Activated CD4-positive, alpha-beta T cell treated with anti-CD3 and anti-CD28 coated beads, Interleukin-2, amount 10 ng/mL, durations not matched to agents 24 days and 14 days (primary cell): ENCODE measurements at regions of chr3 and their contacts with region 1.

Region 1: GRCh38 chr3:169772897-169773828 is at the start of gene MYNN:
- DNase-seq: peak; percentile 98
- H3K4me3 Mint-ChIP-seq: peak within 1 kb of the TSS; percentile 99
- H3K27ac Mint-ChIP-seq: peak within 1 kb of the TSS; percentile 100
- H3K4me1 Mint-ChIP-seq: peaks cover 31% of the 10 kb centered on the region
- H3K27me3 Mint-ChIP-seq: no peaks in the 10 kb centered on the region
- total RNA-seq, gene MYNN: 15.9 and 17.2 TPM in 2 replicates

Region 2: DNA sequence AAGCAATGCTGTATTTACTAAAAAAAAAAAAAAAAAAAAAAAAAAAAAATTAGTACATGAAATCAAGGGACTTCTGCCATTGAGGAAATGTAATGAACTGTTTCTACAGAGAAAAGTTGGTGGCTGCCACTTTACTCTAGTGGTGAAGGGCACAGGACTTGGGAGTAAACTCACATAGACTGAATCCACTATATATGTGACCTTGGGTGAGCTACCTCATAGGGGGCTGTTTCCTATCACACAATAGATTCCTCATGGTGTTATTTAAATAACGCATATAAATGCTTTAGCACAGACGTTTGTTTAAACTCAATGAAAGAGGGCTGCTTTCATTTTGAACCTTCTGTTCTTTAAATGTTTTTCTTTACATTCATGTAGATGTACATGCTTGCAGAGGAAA is 34.1 kb before region 1 on chr3:
- intact Hi-C with region 1: no loop called
- DNase-seq: no peak
- H3K4me3 Mint-ChIP-seq: no peak overlapping the region
- H3K27ac Mint-ChIP-seq: no peak overlapping the region
- H3K4me1 Mint-ChIP-seq: no peaks in the 10 kb centered on the region
- H3K27me3 Mint-ChIP-seq: peaks cover 2% of the 10 kb centered on the region

Region 3: DNA sequence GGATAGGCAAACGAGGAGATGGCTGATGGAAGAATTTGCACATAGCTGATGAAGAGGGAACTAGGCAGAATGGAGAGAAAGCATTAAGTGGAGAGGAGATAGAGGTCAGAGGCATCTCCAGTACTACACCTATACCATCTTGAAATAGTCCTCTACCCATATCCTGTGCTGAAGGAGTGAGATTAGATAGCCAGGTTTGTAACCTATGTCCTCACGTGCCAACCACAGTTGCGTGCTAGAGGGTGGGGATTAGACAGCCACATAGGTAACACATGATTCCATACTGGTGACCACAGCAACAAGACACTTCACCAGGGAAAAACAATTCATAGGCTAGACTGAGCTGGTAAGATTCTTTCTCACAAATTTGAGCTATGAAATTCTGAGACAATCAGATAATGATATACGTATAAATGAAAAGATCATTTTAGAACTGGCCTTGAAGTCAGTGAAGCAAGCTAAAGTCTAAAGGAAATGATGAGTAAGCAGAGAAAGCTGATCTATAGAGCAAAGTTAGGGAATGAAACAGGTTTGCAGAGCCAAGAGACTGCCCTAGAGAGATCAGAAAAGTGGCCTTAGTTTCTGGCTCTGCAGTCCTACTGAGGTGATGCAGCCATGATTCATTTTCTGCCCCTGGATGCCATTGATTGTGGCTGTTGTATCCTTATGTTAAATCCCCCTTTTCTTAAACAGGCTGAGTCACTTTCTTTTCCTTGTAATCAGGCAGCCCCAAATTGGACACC is 17.7 kb after region 1 on chr3:
- intact Hi-C with region 1: loop called (anchors 1 kb)
- DNase-seq: no peak
- H3K4me3 Mint-ChIP-seq: no peak overlapping the region
- H3K27ac Mint-ChIP-seq: no peak overlapping the region
- H3K4me1 Mint-ChIP-seq: peaks cover 5% of the 10 kb centered on the region
- H3K27me3 Mint-ChIP-seq: no peaks in the 10 kb centered on the region

Region 4: DNA sequence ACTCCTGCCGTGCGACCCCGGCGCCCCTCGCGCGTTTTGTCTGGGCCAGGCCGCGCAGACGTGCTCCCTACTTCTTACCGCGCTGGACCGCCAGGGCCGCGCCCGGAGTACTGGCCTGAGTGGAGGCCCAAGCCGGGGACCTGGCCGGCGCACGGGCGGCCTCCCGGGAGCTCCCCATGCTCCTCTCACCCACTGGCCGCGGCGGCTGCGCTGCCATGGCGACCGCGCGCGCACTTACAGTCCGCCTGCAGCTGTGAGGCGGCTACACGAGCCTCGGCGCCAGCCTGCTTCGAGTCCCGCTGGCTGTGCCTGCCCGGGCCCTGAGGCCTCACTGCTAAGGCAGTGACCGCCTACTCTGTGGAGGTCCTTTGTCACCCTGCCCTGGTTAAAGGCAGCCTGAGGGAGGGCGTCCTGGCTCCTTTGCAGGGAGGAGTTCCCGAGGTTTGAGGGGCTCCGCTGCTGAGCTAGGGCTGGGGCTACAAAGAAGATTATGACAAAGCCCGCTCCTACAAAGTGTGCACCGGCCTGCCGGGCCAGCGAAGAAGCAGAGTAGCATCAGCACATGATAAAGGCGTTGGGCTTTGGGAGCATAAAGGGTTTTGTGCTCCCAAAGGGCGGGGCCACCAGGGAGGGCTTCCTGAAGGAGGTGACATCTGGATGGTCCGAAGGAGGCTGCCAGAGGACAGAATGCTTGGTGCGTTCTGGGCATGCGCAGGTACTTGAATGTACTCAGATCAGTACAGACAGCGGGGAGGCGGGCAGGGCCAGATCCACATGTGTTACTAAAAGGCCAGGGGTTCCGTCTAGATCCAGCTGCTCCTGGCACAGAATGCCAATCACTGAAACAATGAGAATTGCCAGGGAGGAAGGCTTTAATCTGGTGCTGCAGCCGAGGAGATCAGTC is 39.4 kb after region 1 on chr3 and contains the starts of genes LRRC34 and LRRIQ4:
- intact Hi-C with region 1: loop called (anchors 1 kb)
- DNase-seq: peak; percentile 91
- H3K4me3 Mint-ChIP-seq: peak within 1 kb of the TSS; percentile 92
- H3K27ac Mint-ChIP-seq: peak within 1 kb of the TSS; percentile 91
- H3K4me1 Mint-ChIP-seq: peaks cover 40% of the 10 kb centered on the region
- H3K27me3 Mint-ChIP-seq: peaks cover 14% of the 10 kb centered on the region
- total RNA-seq, gene LRRC34: 4.7 and 5.8 TPM in 2 replicates
- total RNA-seq, gene LRRIQ4: 0.09 and 0.21 TPM in 2 replicates

Region 5: DNA sequence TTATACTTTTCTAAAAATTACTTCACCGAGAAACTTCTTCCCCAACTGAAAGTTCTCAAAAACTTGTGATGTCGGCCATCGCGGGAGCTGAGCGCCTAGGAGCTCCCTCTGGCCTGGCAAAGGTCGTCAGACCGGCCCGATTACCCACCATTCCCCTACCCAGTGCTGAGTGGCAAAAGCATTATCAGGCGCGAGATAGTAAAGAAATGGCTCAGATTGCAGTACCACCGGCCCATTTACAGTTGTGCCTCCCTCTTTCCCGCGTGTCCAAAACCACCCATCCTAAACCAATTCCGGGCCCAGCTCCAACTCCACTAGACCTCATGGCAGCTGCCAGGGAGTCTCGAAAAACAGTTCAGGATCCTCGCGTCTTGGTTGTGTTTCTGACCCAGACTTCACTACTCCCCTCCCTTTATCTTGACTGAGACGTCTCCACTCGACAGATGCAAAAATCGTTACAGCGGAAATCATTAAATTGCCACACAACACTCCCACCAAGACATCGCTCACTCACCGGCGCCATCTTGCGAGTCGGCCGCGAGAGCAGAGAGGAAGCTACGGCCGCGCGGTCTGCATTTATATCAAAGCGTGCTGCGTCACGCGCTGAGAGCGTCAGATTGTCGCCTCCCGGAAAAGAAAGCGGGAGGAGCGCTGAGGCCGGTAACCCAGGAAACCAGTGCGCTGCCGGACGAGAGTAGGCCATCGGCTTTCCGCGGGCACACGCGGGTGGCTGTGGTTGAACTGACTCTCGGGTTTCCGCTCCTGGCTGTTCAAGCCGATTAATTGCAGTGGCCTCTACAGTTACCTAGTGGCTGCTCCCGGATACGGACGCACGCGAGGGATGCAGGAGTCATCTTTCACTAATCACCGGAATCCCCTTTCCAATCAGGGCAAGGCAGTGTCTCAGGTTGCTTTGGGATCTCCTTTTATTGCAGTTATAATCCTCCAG is 1096.8 kb after region 1 on chr3 and contains the start of gene RPL22L1:
- intact Hi-C with region 1: loop called (anchors 5 kb)
- DNase-seq: peak; percentile 98
- H3K4me3 Mint-ChIP-seq: peak within 1 kb of the TSS; percentile 92
- H3K27ac Mint-ChIP-seq: peak within 1 kb of the TSS; percentile 96
- H3K4me1 Mint-ChIP-seq: peaks cover 18% of the 10 kb centered on the region
- H3K27me3 Mint-ChIP-seq: no peaks in the 10 kb centered on the region
- total RNA-seq, gene RPL22L1: 157 TPM in 2 replicates